ENCODE measurements at regions of chr2 and their contacts with region 1.

Region 1: DNA sequence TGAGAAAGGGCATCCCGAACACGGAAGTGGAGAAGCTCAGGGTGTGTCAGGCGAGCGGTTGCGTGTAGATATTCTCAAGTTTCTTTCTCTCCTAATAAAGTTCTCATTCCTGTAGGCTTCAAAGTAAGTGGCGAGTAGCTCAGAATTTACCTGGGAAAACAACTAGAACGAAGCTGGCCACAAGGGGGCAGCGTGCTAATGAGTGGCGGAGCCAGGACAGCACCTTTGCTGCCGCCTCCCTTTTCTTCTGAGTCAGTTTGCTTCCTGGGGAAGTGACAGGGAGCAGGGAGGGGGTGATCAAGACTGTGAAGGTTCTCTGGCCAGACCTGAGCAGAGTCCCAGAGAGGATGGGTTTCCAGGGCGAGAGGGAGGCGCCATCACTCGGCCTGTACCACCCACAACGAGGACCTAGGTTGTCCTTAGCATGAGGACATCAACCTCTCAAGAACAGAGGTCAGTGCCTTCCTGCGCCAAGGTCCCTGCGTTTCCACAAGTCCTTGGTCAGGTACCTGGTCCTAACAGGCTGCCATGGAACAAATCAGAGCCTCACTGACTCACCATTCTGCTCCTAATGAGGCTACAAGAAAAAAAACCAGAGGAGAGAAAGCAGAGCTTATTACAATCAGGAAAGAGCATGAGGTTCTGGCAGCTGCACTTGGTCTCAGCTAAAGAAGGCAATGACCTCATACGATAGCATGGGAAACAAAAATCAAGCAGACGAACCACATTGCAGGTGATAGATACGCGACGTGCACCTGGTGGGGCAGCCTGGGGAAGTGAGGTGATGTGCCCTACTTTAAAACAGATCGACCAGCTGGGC is 98.6 kb downstream of the PLB1 start:
- DNase-seq: peak; percentile 72 to 93 (median 86)
- ATAC-seq: peak; percentile 79
- H3K4me3 ChIP-seq: peak overlapping the region in 1 of 2 experiments; percentile 0
- H3K4me3 Mint-ChIP-seq: peak overlapping the region; percentile 46
- H3K27ac ChIP-seq: peak overlapping the region in 1 of 2 experiments; percentile 44
- H3K27ac Mint-ChIP-seq: peak overlapping the region; percentile 81
- H3K4me1 ChIP-seq: peaks cover 14% of the 10 kb centered on the region
- H3K4me1 Mint-ChIP-seq: peaks cover 17% of the 10 kb centered on the region
- H3K27me3 ChIP-seq: no peaks in the 10 kb centered on the region
- H3K27me3 Mint-ChIP-seq: peaks cover 7% of the 10 kb centered on the region
- CTCF ChIP-seq: peak; percentile 84

Region 2: DNA sequence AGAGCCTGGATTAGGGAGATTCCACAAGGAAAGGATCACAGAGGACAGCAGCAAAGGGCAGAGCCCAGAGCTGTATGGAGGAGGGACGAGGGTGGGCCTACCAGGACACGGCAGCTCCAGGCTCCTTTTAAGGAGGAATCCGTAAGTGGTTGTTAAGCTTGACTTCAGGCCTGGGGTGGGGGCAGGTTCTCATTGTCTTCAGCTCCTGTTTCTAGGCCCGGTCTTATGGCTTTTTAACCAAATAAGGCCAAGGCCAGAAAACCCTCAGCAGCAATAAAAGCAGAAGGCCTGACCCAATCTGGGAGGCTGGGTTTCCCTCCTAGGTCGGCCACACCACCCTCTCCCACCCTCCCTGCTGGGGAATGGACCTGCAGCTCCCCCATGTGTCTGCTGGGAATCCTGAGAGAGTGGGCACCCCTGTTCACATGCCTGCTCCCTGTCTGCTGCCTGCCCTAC is 12.5 kb after region 1 on chr2:
- CTCF ChIA-PET with region 1: interaction called, 41 read pairs
- POLR2A ChIA-PET with region 1: no interaction called
- intact Hi-C with region 1: loop called in 1 of 2 experiments (anchors 2 kb)
- DNase-seq: peak in 1 of 9 experiments; percentile 28
- ATAC-seq: no peak
- H3K4me3 ChIP-seq: no peak overlapping the region
- H3K4me3 Mint-ChIP-seq: no peak overlapping the region
- H3K27ac ChIP-seq: no peak overlapping the region
- H3K27ac Mint-ChIP-seq: no peak overlapping the region
- H3K4me1 ChIP-seq: no peaks in the 10 kb centered on the region
- H3K4me1 Mint-ChIP-seq: peaks cover 13% of the 10 kb centered on the region
- H3K27me3 ChIP-seq: no peaks in the 10 kb centered on the region
- H3K27me3 Mint-ChIP-seq: no peaks in the 10 kb centered on the region
- CTCF ChIP-seq: no peak

Region 3: GRCh38 chr2:28631514-28632206 is 37.2 kb after region 1 on chr2:
- CTCF ChIA-PET with region 1: interaction called, 15 read pairs
- POLR2A ChIA-PET with region 1: no interaction called
- intact Hi-C with region 1: no loop called
- DNase-seq: no peak
- ATAC-seq: no peak
- H3K4me3 ChIP-seq: no peak overlapping the region
- H3K4me3 Mint-ChIP-seq: no peak overlapping the region
- H3K27ac ChIP-seq: no peak overlapping the region
- H3K27ac Mint-ChIP-seq: no peak overlapping the region
- H3K4me1 ChIP-seq: peaks cover 10% of the 10 kb centered on the region
- H3K4me1 Mint-ChIP-seq: peaks cover 15% of the 10 kb centered on the region
- H3K27me3 ChIP-seq: no peaks in the 10 kb centered on the region
- H3K27me3 Mint-ChIP-seq: no peaks in the 10 kb centered on the region
- CTCF ChIP-seq: no peak

Region 4: DNA sequence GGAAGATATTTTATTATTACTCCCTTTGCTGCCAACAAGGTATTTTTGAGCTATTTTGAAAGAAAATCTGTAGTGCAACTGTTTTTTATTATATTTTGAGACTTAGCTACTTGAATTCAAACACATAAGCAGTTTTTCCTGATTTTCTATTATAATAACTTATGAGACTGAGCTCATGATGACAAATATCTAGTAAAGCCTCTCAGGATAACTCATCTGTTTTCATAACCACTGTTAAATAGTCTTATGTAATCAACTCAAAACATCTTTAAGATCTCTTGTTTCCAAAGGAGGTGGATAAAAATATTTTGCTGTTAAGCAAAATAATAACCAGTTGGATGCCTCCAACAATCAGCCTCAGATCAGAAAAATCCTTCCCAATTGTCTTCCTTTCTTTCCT is 135.2 kb after region 1 on chr2:
- CTCF ChIA-PET with region 1: interaction called, 19 read pairs
- POLR2A ChIA-PET with region 1: no interaction called
- intact Hi-C with region 1: no loop called
- DNase-seq: no peak
- ATAC-seq: no peak
- H3K4me3 ChIP-seq: no peak overlapping the region
- H3K4me3 Mint-ChIP-seq: no peak overlapping the region
- H3K27ac ChIP-seq: no peak overlapping the region
- H3K27ac Mint-ChIP-seq: no peak overlapping the region
- H3K4me1 ChIP-seq: no peaks in the 10 kb centered on the region
- H3K4me1 Mint-ChIP-seq: peaks cover 2% of the 10 kb centered on the region
- H3K27me3 ChIP-seq: no peaks in the 10 kb centered on the region
- H3K27me3 Mint-ChIP-seq: no peaks in the 10 kb centered on the region
- CTCF ChIP-seq: no peak

Region 5: DNA sequence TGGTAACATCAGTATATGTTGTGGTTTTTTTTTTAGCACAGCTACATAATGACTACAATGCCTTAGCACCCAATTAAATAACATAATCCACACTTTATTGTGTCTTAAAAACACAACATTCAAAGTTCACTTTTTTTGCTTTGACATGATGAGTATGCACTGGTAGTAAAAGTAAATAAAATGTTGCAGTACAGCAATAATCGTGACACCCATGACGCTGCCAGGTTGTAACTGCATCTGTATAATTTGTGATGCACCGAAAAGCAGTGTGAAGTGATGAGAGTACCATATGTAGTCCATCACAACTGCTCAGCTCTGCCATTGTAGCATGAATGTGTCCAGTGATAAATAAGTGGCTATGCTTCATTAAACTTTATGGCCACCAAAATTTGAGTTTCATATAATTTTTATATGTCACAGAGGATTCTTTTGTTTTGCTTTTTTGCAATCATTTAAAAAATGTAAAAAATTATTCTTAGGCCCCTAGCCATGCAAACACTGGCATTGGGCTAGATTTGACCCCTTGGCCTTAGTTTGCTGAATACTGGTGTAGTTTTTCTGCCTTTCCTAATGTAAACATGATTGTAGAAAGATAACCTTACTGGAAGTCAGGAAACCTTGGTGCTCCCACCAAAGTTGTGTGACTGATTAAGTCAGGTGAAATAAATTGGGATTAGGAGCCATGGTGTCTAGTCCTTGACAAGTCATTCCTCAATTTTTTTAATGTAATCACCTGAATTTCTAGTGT is 173.0 kb after region 1 on chr2:
- CTCF ChIA-PET with region 1: interaction called, 32 read pairs
- POLR2A ChIA-PET with region 1: no interaction called
- intact Hi-C with region 1: no loop called
- DNase-seq: no peak
- ATAC-seq: no peak
- H3K4me3 ChIP-seq: no peak overlapping the region
- H3K4me3 Mint-ChIP-seq: no peak overlapping the region
- H3K27ac ChIP-seq: no peak overlapping the region
- H3K27ac Mint-ChIP-seq: no peak overlapping the region
- H3K4me1 ChIP-seq: peaks cover 55% of the 10 kb centered on the region
- H3K4me1 Mint-ChIP-seq: peaks cover 89% of the 10 kb centered on the region
- H3K27me3 ChIP-seq: no peaks in the 10 kb centered on the region
- H3K27me3 Mint-ChIP-seq: no peaks in the 10 kb centered on the region
- CTCF ChIP-seq: no peak

Region 6: DNA sequence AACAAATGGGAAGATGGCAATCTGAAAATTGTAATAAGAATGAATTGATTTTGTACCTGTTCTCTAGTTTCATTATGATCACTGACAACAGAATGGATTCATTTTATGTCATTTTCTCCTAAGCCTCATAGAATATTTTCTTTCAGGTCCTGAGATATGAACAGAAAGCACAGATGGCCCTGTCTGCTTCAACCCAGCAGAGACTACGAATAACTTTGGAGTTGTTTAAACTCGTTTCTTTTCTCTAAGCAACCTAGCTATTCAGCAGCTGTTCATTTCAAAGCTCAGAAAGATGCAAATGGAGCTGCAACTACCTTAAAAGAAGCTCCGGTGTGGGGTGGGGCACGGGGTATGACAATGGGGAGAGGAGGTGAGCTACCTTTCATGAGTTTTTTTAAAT is 1201.9 kb after region 1 on chr2:
- CTCF ChIA-PET with region 1: no interaction called
- POLR2A ChIA-PET with region 1: no interaction called
- intact Hi-C with region 1: no loop called
- DNase-seq: no peak
- ATAC-seq: no peak
- H3K4me3 ChIP-seq: no peak overlapping the region
- H3K4me3 Mint-ChIP-seq: no peak overlapping the region
- H3K27ac ChIP-seq: no peak overlapping the region
- H3K27ac Mint-ChIP-seq: no peak overlapping the region
- H3K4me1 ChIP-seq: no peaks in the 10 kb centered on the region
- H3K4me1 Mint-ChIP-seq: no peaks in the 10 kb centered on the region
- H3K27me3 ChIP-seq: no peaks in the 10 kb centered on the region
- H3K27me3 Mint-ChIP-seq: peaks cover 7% of the 10 kb centered on the region
- CTCF ChIP-seq: no peak

Measured in CD8-positive, alpha-beta T cell (primary cell).